CD8-positive, alpha-beta T cell (primary cell): ENCODE measurements at regions of chr2 and their contacts with region 1.

Region 1: GRCh38 chr2:166539340-166540162 is 45.5 kb upstream of the SCN7A start:
- DNase-seq: peak in 3 of 9 experiments; percentile 5 to 55 (median 40)
- ATAC-seq: peak; percentile 62
- H3K4me3 ChIP-seq: no peak overlapping the region
- H3K4me3 Mint-ChIP-seq: no peak overlapping the region
- H3K27ac ChIP-seq: no peak overlapping the region
- H3K27ac Mint-ChIP-seq: no peak overlapping the region
- H3K4me1 ChIP-seq: no peaks in the 10 kb centered on the region
- H3K4me1 Mint-ChIP-seq: no peaks in the 10 kb centered on the region
- H3K27me3 ChIP-seq: no peaks in the 10 kb centered on the region
- H3K27me3 Mint-ChIP-seq: peaks cover 3% of the 10 kb centered on the region
- CTCF ChIP-seq: peak; percentile 75

Region 2: DNA sequence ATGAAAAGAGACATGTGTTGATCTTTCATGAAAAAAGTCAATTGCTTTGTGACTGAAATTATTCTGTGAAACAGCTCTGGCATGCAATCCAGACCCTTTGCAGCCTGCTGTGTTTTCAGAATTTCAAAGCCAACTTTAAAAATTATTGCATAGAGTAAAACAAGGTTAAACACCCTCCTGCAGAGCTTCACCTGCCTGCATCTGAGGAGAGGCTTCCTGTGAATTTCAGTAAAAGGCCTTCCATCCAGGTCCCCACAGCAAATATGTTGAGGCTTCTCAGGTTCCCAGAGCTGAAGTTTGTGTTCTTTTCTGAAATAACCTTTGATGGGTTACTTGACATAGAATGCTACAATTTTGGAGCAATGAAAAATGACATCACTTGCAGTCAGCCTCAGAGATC is 352.8 kb after region 1 on chr2:
- CTCF ChIA-PET with region 1: no interaction called
- POLR2A ChIA-PET with region 1: no interaction called
- intact Hi-C with region 1: loop called in 1 of 2 experiments (anchors 5 kb)
- DNase-seq: no peak
- ATAC-seq: no peak
- H3K4me3 ChIP-seq: no peak overlapping the region
- H3K4me3 Mint-ChIP-seq: no peak overlapping the region
- H3K27ac ChIP-seq: no peak overlapping the region
- H3K27ac Mint-ChIP-seq: no peak overlapping the region
- H3K4me1 ChIP-seq: no peaks in the 10 kb centered on the region
- H3K4me1 Mint-ChIP-seq: no peaks in the 10 kb centered on the region
- H3K27me3 ChIP-seq: no peaks in the 10 kb centered on the region
- H3K27me3 Mint-ChIP-seq: no peaks in the 10 kb centered on the region
- CTCF ChIP-seq: no peak

Region 3: DNA sequence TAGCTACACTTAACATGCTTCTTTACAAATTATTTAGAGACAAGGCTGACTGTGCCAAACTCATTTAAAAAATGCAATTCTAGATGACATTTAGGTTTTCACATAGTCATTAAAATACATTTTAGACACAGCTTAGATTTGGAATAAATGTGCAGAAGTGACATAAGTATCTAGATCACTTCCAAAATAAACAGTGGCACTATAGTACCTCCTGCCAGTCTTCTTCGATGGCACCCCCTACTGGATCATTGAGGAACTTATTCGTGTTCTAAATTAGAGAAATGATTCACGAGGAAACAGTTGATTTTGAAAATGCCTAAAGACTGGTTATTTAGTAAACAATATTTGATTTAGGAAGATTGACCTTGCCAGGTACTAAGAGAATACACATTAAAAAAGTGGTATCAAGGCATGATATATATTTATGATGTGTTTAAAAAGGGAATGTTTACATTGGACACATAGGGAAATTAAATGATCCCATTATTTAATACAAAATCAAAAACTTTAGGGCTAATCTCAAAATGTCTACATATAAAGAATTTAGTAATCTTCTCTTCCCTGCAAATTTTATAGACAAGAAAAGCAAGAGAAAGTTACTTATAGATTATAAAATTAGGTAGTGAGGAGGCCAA is 672.6 kb after region 1 on chr2:
- CTCF ChIA-PET with region 1: interaction called, 3 read pairs
- POLR2A ChIA-PET with region 1: no interaction called
- intact Hi-C with region 1: loop called in 1 of 2 experiments (anchors 1 kb)
- DNase-seq: peak in 2 of 9 experiments; percentile 4 to 28
- ATAC-seq: no peak
- H3K4me3 ChIP-seq: no peak overlapping the region
- H3K4me3 Mint-ChIP-seq: no peak overlapping the region
- H3K27ac ChIP-seq: no peak overlapping the region
- H3K27ac Mint-ChIP-seq: no peak overlapping the region
- H3K4me1 ChIP-seq: no peaks in the 10 kb centered on the region
- H3K4me1 Mint-ChIP-seq: no peaks in the 10 kb centered on the region
- H3K27me3 ChIP-seq: no peaks in the 10 kb centered on the region
- H3K27me3 Mint-ChIP-seq: no peaks in the 10 kb centered on the region
- CTCF ChIP-seq: no peak